Mammary epithelial cell (primary cell): ENCODE measurements at regions of chr9 and their contacts with region 1.

Region 1: DNA sequence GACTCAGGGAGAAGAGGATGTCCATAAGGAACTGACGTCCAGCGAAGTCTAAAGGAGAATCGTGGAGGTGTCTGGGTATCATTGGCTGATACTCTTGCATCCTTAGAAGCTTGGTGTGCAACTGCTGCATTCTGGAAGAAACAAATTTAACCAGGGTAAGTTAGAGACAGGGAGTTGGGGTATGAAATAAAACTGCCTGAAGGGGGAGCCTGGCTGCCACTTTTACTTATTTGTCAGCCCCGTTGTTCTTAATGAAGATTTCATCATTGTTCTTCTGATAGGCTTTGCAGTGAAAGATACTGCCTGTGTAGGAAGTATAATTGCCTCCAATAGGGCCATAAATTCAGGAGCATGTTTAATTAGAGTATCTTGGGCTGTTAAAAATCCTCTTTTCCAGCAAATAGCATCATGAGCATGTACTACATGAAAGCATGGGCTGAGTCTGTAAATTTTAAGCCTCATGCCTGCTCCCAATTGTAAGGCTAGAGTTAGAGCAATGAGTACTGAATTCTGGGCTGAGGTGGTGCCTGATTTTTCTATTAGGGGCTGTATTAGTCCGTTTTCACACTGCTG is 1264.5 kb upstream of the ACO1 start:
- DNase-seq: peak; percentile 55
- H3K4me3 ChIP-seq: no peak overlapping the region
- H3K27ac ChIP-seq: no peak overlapping the region
- H3K4me1 ChIP-seq: no peaks in the 10 kb centered on the region
- H3K27me3 ChIP-seq: no peaks in the 10 kb centered on the region
- CTCF ChIP-seq: peak; percentile 67 to 74

Region 2: GRCh38 chr9:30796764-30797163 is 323.2 kb before region 1 on chr9:
- CTCF ChIA-PET with region 1: no interaction called
- dilution Hi-C with region 1: no loop called
- in situ Hi-C with region 1: no loop called
- intact Hi-C with region 1: no loop called
- DNase-seq: no peak
- H3K4me3 ChIP-seq: no peak overlapping the region
- H3K27ac ChIP-seq: no peak overlapping the region
- H3K4me1 ChIP-seq: no peaks in the 10 kb centered on the region
- H3K27me3 ChIP-seq: no peaks in the 10 kb centered on the region
- CTCF ChIP-seq: no peak

Region 3: DNA sequence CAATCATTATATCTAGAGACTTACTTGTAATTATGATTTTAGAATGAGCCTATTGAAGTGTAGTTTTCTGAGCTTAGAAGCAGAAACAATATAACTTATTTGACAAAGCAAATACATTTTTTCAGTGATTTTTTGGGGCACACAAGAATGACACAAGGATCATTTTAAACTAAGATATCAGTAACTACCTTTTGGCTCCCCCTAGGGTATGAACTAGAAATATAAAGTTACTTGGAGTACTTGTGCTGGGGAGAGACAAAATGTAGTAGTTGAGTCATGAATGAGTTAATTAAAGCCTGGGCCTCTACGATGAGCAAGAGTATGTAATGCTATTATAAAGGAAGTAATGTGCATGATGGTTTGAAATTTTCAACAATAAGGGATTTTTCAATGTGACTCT is 20.3 kb after region 1 on chr9:
- CTCF ChIA-PET with region 1: no interaction called
- dilution Hi-C with region 1: no loop called
- in situ Hi-C with region 1: no loop called
- intact Hi-C with region 1: loop called (anchors 2 kb)
- DNase-seq: peak; percentile 68
- H3K4me3 ChIP-seq: no peak overlapping the region
- H3K27ac ChIP-seq: no peak overlapping the region
- H3K4me1 ChIP-seq: peaks cover 23% of the 10 kb centered on the region
- H3K27me3 ChIP-seq: no peaks in the 10 kb centered on the region
- CTCF ChIP-seq: peak; percentile 29 to 50

Region 4: DNA sequence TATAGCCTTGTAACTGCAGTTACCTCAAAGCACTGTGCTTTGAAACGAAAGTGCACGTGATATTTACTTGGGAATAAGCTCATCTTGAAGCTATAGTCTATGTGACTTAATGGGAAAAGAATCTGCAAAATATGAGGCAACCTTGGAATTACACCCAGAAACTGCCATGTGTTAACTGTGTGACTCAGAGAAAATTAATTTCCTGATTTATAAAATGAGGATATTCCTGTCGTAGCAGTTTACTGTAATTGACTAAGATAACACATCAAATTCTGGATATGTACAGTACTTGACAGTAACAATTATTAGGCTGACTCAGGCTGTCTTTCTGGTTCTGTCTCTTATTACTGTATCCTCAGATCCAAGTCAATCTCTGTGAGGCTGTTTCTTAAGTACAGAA is 184.6 kb after region 1 on chr9:
- CTCF ChIA-PET with region 1: interaction called, 7 read pairs
- dilution Hi-C with region 1: no loop called
- in situ Hi-C with region 1: loop called in 1 of 2 experiments (anchors 10 kb)
- intact Hi-C with region 1: loop called (anchors 1 kb)
- DNase-seq: peak; percentile 93
- H3K4me3 ChIP-seq: peak overlapping the region in 1 of 3 experiments; percentile 22
- H3K27ac ChIP-seq: peak overlapping the region; percentile 97
- H3K4me1 ChIP-seq: peaks cover 5% of the 10 kb centered on the region
- H3K27me3 ChIP-seq: no peaks in the 10 kb centered on the region
- CTCF ChIP-seq: no peak

Region 5: DNA sequence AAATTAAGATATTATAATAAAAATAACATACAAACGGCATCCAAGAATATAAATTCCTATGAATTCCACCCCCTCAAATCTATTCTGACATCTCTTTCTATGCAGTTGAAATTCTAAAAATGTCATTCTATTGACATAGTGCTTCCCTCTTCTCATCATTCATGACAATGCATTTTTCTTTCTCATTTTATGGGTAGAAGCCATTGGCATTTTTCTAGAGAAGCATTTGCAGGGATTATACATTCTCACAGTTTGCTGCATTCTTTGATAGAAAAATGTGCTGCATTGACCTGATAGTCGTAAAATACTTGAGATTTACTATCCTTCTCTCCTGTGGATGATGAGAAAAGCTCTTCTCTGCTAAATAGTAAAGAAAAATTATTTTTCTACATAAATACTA is 503.5 kb after region 1 on chr9:
- CTCF ChIA-PET with region 1: no interaction called
- dilution Hi-C with region 1: no loop called
- in situ Hi-C with region 1: no loop called
- intact Hi-C with region 1: no loop called
- DNase-seq: no peak
- H3K4me3 ChIP-seq: no peak overlapping the region
- H3K27ac ChIP-seq: no peak overlapping the region
- H3K4me1 ChIP-seq: no peaks in the 10 kb centered on the region
- H3K27me3 ChIP-seq: no peaks in the 10 kb centered on the region
- CTCF ChIP-seq: no peak

Region 6: DNA sequence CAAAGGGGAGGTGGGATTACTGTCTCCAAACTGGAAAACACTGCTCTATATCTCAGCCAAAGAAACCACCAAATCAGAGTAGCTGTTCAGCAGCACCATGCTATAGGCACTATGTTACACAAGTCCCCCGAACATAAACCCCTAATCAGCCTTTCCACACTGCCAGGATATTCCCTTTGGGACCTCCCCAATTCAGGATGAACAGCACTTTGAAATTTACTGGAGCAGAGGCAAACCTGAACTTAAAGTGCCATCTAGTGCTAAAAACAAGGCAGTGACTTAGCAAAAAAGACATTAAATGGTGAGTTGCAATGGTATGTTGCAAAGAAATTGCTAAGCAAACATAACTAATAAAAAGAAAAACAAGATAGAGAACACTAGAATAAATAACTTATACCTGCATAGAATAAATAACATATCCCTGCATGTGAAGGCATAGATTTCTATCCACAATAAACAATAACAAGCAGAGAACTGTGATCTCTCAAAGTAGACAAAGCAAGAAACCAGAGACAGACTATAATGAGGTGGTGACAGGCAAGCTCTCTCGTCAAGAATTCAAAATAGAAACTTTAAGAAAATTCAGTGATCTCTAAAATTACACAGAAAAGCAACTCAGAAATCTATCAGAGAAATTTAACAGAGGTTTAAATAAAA is 680.1 kb after region 1 on chr9:
- CTCF ChIA-PET with region 1: no interaction called
- dilution Hi-C with region 1: no loop called
- in situ Hi-C with region 1: loop called (anchors 10 to 25 kb)
- intact Hi-C with region 1: loop called (anchors 1 kb)
- DNase-seq: peak; percentile 41
- H3K4me3 ChIP-seq: no peak overlapping the region
- H3K27ac ChIP-seq: no peak overlapping the region
- H3K4me1 ChIP-seq: no peaks in the 10 kb centered on the region
- H3K27me3 ChIP-seq: no peaks in the 10 kb centered on the region
- CTCF ChIP-seq: peak; percentile 73 to 78

Region 7: GRCh38 chr9:32350682-32351081 is 1230.7 kb after region 1 on chr9:
- CTCF ChIA-PET with region 1: no interaction called
- dilution Hi-C with region 1: no loop called
- in situ Hi-C with region 1: loop called in 1 of 2 experiments (anchors 25 kb)
- intact Hi-C with region 1: no loop called
- DNase-seq: peak; percentile 14
- H3K4me3 ChIP-seq: no peak overlapping the region
- H3K27ac ChIP-seq: no peak overlapping the region
- H3K4me1 ChIP-seq: no peaks in the 10 kb centered on the region
- H3K27me3 ChIP-seq: no peaks in the 10 kb centered on the region
- CTCF ChIP-seq: peak; percentile 25 to 43